ENCODE measurements at regions of chr19 and their contacts with region 1.

Region 1: DNA sequence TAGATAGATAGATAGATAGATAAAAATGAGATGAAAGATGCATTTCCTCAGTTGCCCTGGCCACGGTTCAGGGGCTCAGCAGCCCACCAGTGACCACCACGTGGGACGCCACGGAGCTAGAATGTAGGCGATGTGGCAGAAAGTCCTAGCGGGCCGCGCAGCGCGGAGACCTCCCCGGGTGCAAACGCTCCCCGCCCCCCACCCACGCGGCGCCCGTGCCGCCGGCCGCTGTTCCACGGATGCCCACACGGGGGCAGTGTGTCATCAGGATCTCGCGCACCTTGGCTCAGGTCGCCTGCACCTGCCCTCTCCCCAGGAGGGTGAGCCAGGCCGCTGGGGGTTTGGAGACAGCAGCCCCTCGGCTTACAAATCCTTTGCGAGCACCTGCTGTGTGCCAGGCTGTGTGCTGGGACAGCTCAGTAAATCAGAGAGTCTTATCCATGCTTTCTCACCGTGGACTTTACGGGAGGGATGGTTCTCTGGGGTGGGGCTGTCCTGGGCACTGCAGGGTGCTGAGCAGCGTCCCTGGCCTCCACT is 13.7 kb upstream of the TLE5 start:
- DNase-seq: no peak
- ATAC-seq: peak; percentile 35

Region 2: DNA sequence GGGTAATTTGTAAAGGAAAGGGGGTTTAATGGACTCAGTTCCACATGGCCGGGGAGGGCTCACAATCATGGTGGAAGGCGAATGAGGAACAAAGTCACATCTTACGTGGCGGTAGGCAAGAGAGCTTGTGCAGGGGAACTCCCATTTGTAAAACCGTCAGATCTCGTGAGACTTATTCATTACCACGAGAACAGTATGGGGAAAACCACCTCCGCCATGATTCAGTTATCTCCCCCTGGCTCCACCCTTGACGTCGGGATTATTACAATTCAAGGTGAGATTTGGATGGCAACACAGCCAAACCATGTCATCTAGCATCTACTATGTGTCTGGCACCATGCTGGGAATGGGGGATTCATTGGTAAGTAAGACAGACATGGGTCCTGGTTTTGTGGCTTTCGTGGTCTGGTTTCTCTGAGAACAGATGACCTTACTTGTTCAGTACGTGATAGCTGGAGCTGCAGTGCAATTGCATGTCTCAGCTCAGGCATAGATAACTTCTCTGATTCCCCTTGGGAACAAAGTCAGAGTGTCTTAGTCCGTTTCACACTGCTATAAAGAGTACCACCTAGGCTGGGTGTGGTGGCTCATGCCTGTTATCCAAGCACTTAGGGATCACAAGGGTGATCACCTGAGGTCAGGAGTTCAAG is 248.0 kb before region 1 on chr19:
- intact Hi-C with region 1: no loop called
- DNase-seq: no peak
- ATAC-seq: no peak

Region 3: GRCh38 chr19:2912306-2912705 is 163.7 kb before region 1 on chr19:
- intact Hi-C with region 1: no loop called
- DNase-seq: no peak
- ATAC-seq: no peak

Region 4: GRCh38 chr19:3012621-3013260 is 63.2 kb before region 1 on chr19:
- intact Hi-C with region 1: no loop called
- DNase-seq: no peak
- ATAC-seq: peak; percentile 48

Region 5: DNA sequence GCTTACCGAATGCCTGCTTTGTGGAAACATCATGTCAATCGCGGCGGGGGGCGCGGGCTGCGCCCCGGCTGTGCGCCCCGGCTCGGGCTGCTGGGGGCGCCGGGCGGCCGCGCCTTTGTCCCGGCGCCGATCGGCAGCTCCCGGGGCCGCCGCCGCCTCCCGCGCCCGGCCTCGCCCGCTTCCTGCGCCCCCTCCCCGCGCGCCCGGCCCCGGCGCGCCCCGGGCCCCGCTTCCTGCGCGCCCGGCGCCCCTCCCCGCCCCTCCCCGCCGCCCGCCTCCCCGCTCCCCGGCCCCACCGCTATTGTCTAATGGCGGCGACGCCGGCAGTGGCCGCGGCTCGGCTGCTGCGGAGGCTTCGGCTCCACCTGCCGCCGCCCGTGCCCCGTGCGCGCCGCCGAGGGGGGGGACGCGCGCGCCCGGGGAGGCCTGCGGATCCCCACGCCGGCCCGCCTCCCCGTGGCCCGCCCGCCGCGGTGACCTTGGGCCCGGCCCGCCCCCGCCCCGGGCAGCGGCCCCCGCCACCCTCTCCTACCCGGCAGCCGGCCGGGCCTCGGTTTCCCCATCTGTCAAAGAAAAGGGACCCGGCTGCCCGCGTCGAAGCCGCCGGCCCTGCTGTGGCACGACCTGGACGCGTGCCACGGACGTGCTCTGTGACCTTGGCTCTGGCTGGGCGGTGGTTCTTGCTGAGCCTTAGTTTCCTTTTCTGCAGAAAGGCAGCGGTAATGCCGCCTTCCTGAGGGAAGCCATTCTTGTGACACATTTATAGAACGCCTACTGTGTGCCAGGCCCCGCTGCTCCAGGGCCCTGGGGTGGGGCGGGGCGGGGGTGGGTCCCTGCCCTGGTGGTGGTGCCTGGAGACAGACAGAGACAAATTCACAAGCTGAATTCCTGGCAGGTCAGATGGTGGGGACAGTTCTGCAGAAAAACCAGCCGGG is 13.5 kb before region 1 on chr19 and contains the start of gene TLE5:
- intact Hi-C with region 1: no loop called
- DNase-seq: peak; percentile 87
- ATAC-seq: peak; percentile 58
- total RNA-seq, gene TLE5: 775 TPM

Region 6: GRCh38 chr19:3100081-3100864 is 24.3 kb after region 1 on chr19:
- intact Hi-C with region 1: loop called (anchors 1 kb)
- DNase-seq: no peak
- ATAC-seq: no peak

Region 7: GRCh38 chr19:3125900-3126524 is 50.0 kb after region 1 on chr19:
- intact Hi-C with region 1: loop called (anchors 2 kb)
- DNase-seq: peak; percentile 83
- ATAC-seq: peak; percentile 58